PC-9 (cell line): ENCODE measurements at regions of chr14 and their contacts with region 1.

Region 1: DNA sequence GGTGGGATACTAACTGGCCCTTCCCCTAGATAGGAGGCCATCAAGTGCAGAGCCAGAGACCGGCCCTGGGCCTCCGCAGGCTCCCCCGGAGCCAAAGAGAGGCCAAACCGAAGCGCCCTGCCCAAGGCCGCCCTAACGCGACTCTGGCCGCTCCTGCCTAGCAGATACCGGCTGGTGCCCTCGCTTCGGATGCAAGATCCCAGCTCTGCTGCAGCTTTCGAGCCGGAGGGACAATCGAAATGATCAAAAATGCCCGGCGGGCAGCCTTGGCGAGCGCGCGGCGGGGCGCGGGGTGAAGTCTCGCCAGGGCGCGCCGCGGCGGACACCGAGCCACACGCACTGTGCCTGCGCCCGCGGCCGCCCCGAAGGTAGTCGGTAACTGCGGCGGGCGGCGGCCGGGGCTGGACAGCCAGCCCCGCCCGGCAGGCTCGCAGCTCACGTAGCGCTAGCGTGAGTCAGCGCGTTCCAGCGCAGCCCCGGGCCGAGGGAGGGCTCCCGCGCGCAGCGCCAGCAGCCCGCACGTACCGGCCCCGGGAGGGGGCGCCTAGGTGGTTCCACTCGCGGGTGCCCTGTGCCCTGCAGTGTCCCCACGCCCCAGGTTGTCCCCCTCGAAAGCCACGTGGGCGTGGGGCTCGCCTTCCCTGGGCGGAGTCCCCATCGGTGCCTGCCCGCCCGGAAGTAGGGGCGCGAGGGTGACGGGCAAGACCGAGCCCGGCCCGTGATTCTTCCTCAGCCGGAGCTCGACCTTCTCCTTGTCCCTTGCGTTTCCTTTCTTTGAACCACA is 109.2 kb upstream of the EGLN3 start:
- DNase-seq: peak; percentile 46 to 79
- H3K4me3 ChIP-seq: peak overlapping the region; percentile 68
- H3K27ac ChIP-seq: peak overlapping the region; percentile 68
- H3K4me1 ChIP-seq: peaks cover 24% of the 10 kb centered on the region; the same call in 1 of the 2 replicates
- H3K27me3 ChIP-seq: no peaks in the 10 kb centered on the region
- CTCF ChIP-seq: no peak; the same call in 1 of the 2 replicates

Region 2: GRCh38 chr14:32469388-32470160 is 1590.5 kb before region 1 on chr14:
- CTCF ChIA-PET with region 1: no interaction called
- POLR2A ChIA-PET with region 1: interaction called, 10 read pairs
- intact Hi-C with region 1: no loop called
- DNase-seq: peak in 1 of 2 experiments; percentile 48
- H3K4me3 ChIP-seq: no peak overlapping the region
- H3K27ac ChIP-seq: peak overlapping the region; percentile 71
- H3K4me1 ChIP-seq: peaks cover 46% of the 10 kb centered on the region
- H3K27me3 ChIP-seq: no peaks in the 10 kb centered on the region
- CTCF ChIP-seq: peak; percentile 74

Region 3: DNA sequence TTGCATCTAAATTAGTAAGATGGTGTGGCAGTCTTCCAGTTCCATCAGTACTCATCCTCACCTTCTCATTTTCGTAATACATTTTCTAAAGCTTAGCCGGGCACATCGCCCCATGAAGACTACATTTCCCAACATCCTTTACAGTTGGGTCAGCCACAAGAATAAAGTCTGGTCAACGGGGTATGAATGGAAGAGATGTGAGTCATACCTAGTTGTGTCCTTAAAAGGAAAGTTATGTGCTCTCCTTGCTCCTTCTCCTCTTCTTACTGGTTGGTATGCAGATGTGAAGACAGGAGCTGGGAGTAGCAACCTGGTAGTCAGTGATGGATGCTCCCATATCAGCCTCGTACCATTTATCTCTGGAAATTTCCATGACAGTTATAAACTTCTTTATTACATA is 73.2 kb before region 1 on chr14:
- CTCF ChIA-PET with region 1: no interaction called
- POLR2A ChIA-PET with region 1: interaction called, 19 read pairs
- intact Hi-C with region 1: no loop called
- DNase-seq: peak; percentile 9 to 71
- H3K4me3 ChIP-seq: no peak overlapping the region
- H3K27ac ChIP-seq: no peak overlapping the region
- H3K4me1 ChIP-seq: no peaks in the 10 kb centered on the region
- H3K27me3 ChIP-seq: no peaks in the 10 kb centered on the region
- CTCF ChIP-seq: no peak

Region 4: GRCh38 chr14:34098045-34098984 is 38.3 kb after region 1 on chr14:
- CTCF ChIA-PET with region 1: interaction called, 4 read pairs
- POLR2A ChIA-PET with region 1: interaction called, 4 read pairs
- intact Hi-C with region 1: loop called (anchors 1 kb)
- DNase-seq: peak; percentile 43 to 75
- H3K4me3 ChIP-seq: no peak overlapping the region
- H3K27ac ChIP-seq: no peak overlapping the region
- H3K4me1 ChIP-seq: peaks cover 29% of the 10 kb centered on the region
- H3K27me3 ChIP-seq: no peaks in the 10 kb centered on the region
- CTCF ChIP-seq: peak; percentile 75